Psoas muscle (tissue), 8 donors: ENCODE measurements at regions of chr9 and their contacts with region 1.

Region 1: GRCh38 chr9:35729700-35730485 is 2.1 kb downstream of the TLN1 start:
- DNase-seq: peak; percentile 56 to 73
- ATAC-seq: peak; percentile 16 to 31 (median 22)
- H3K4me3 ChIP-seq: peak overlapping the region; percentile 82
- H3K27ac ChIP-seq: peak overlapping the region; percentile 98
- H3K4me1 ChIP-seq: peaks cover 56% of the 10 kb centered on the region
- H3K27me3 ChIP-seq: no peaks in the 10 kb centered on the region
- CTCF ChIP-seq: peak; percentile 52

Region 2: DNA sequence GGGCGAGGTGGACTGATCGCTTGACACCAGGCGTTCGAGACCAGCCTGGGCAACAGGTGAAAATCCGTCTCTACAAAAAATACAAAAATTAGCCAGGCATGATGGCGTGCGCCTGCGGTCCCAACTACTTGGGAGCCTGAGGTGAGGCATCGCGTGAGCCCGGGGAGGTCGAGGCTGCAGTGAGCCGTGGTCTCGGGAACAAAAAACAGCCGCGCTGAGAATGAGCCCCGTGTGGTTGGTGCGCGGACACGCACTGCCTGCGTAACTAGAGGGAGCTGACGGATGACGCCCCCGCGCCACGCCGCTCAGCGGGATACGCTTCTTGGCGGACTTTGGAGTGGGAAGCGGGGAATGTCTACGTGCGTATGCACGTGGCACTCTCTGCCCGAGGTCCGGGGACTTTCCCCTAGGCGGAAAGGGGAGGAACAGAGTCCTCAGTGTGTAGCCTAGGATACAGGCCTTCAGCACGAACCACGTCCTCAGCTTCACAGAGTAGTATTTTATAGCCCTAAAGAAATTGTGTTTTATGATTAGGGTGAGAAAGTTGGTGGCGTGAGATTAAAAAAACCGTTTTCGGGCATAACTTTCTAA is 72.3 kb before region 1 on chr9 and contains the start of gene RMRP:
- intact Hi-C with region 1: loop called (anchors 2 kb)
- DNase-seq: peak; percentile 98 to 99
- ATAC-seq: peak; percentile 88 to 93 (median 90)
- H3K4me3 ChIP-seq: peak within 1 kb of the TSS; percentile 89
- H3K27ac ChIP-seq: peak within 1 kb of the TSS; percentile 100
- H3K4me1 ChIP-seq: peaks cover 26% of the 10 kb centered on the region
- H3K27me3 ChIP-seq: no peaks in the 10 kb centered on the region
- CTCF ChIP-seq: peak; percentile 33
- total RNA-seq, gene RMRP: 3,787 to 10,280 (median 6,744) TPM

Region 3: GRCh38 chr9:35690431-35691333 is 39.2 kb before region 1 on chr9:
- intact Hi-C with region 1: loop called (anchors 2 kb)
- DNase-seq: peak; percentile 86 to 90
- ATAC-seq: peak; percentile 34 to 60 (median 44)
- H3K4me3 ChIP-seq: peak overlapping the region; percentile 100
- H3K27ac ChIP-seq: peak overlapping the region; percentile 100
- H3K4me1 ChIP-seq: peaks cover 19% of the 10 kb centered on the region
- H3K27me3 ChIP-seq: no peaks in the 10 kb centered on the region
- CTCF ChIP-seq: no peak

Region 4: GRCh38 chr9:35696525-35697215 is 33.2 kb before region 1 on chr9:
- intact Hi-C with region 1: loop called (anchors 2 kb)
- DNase-seq: peak; percentile 46 to 74
- ATAC-seq: peak; percentile 71 to 85 (median 76)
- H3K4me3 ChIP-seq: no peak overlapping the region
- H3K27ac ChIP-seq: peak overlapping the region; percentile 46
- H3K4me1 ChIP-seq: peaks cover 13% of the 10 kb centered on the region
- H3K27me3 ChIP-seq: no peaks in the 10 kb centered on the region
- CTCF ChIP-seq: peak; percentile 82

Region 5: GRCh38 chr9:35748858-35749514 is 19.1 kb after region 1 on chr9 and contains the starts of genes GBA2 and RGP1:
- intact Hi-C with region 1: loop called in 1 of 2 experiments (anchors 2 kb)
- DNase-seq: peak; percentile 88 to 94
- ATAC-seq: peak; percentile 93 to 95 (median 94)
- H3K4me3 ChIP-seq: peak within 1 kb of the TSS; percentile 93
- H3K27ac ChIP-seq: peak within 1 kb of the TSS; percentile 90
- H3K4me1 ChIP-seq: peaks cover 42% of the 10 kb centered on the region
- H3K27me3 ChIP-seq: no peaks in the 10 kb centered on the region
- CTCF ChIP-seq: no peak
- total RNA-seq, gene GBA2: 36.1 to 83.6 (median 50.1) TPM
- total RNA-seq, gene RGP1: 32.3 to 51.0 (median 37.4) TPM